Activated T-helper 2 cell treated with anti-CD3 and anti-CD28 coated beads, Interferon-gamma antibody, Interleukin-2, Interleukin-4, amounts not matched to agents 10 μg/mL and 5 μg/mL and 100 μg/mL, durations not matched to agents 14 hours and 24 hours and 36 hours (primary cell): ENCODE measurements at regions of chr14 and their contacts with region 1.

Region 1: GRCh38 chr14:23605931-23606585 is 27.5 kb upstream of the JPH4 start:
- DNase-seq: no peak
- H3K4me3 Mint-ChIP-seq: no peak overlapping the region
- H3K27ac Mint-ChIP-seq: peak overlapping the region; percentile 89
- H3K4me1 Mint-ChIP-seq: peaks cover 37% of the 10 kb centered on the region
- H3K27me3 Mint-ChIP-seq: no peaks in the 10 kb centered on the region

Region 2: DNA sequence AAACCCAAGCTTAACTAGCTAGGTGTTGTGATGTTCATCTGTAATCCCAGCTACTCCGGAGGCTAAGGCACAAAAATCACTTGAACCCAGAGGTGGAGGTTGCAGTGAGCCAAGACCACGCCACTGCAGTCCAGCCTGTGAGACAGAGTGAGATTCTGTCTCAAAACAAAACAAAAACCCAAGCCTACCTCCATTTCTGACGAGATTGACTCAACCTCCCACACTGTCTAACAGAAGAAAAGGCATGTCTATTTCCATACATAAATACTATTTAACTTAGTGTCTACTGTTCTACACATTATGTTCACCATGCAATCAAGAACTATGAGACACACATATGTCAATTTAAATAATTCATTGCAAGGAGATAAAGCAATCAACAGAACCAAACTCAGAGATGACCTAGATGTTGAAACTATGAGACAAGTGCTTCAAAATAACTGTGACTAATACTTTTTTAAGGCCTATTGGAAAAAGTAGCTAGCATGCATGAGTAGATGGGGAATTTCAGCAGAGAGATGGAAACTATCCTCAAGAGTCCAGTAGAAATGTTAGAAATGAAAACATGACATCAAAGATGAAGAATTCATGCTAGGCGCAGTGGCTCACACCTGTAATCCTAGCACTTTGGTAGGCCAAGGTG is 271.6 kb after region 1 on chr14:
- intact Hi-C with region 1: loop called (anchors 1 kb)
- DNase-seq: no peak
- H3K4me3 Mint-ChIP-seq: peak overlapping the region; percentile 6
- H3K27ac Mint-ChIP-seq: peak overlapping the region; percentile 86
- H3K4me1 Mint-ChIP-seq: peaks cover 26% of the 10 kb centered on the region
- H3K27me3 Mint-ChIP-seq: no peaks in the 10 kb centered on the region